ENCODE measurements at regions of chr1 and their contacts with region 1.

Region 1: GRCh38 chr1:211680752-211681327 is 5.4 kb upstream of the NEK2 start:
- DNase-seq: peak; percentile 92
- H3K4me3 Mint-ChIP-seq: no peak overlapping the region
- H3K27ac Mint-ChIP-seq: peak overlapping the region; percentile 24
- H3K4me1 Mint-ChIP-seq: peaks cover 8% of the 10 kb centered on the region
- H3K27me3 Mint-ChIP-seq: no peaks in the 10 kb centered on the region
- CTCF ChIP-seq: peak; percentile 99

Region 2: GRCh38 chr1:211382714-211383480 is 297.9 kb before region 1 on chr1:
- CTCF ChIA-PET with region 1: no interaction called
- POLR2A ChIA-PET with region 1: no interaction called
- intact Hi-C with region 1: no loop called
- DNase-seq: peak; percentile 99
- H3K4me3 Mint-ChIP-seq: peak overlapping the region; percentile 82
- H3K27ac Mint-ChIP-seq: peak overlapping the region; percentile 98
- H3K4me1 Mint-ChIP-seq: peaks cover 26% of the 10 kb centered on the region
- H3K27me3 Mint-ChIP-seq: no peaks in the 10 kb centered on the region
- CTCF ChIP-seq: no peak

Region 3: GRCh38 chr1:211527006-211527405 is 153.8 kb before region 1 on chr1:
- CTCF ChIA-PET with region 1: no interaction called
- POLR2A ChIA-PET with region 1: no interaction called
- intact Hi-C with region 1: no loop called
- DNase-seq: no peak
- H3K4me3 Mint-ChIP-seq: no peak overlapping the region
- H3K27ac Mint-ChIP-seq: peak overlapping the region; percentile 4
- H3K4me1 Mint-ChIP-seq: peaks cover 39% of the 10 kb centered on the region
- H3K27me3 Mint-ChIP-seq: no peaks in the 10 kb centered on the region
- CTCF ChIP-seq: no peak

Region 4: DNA sequence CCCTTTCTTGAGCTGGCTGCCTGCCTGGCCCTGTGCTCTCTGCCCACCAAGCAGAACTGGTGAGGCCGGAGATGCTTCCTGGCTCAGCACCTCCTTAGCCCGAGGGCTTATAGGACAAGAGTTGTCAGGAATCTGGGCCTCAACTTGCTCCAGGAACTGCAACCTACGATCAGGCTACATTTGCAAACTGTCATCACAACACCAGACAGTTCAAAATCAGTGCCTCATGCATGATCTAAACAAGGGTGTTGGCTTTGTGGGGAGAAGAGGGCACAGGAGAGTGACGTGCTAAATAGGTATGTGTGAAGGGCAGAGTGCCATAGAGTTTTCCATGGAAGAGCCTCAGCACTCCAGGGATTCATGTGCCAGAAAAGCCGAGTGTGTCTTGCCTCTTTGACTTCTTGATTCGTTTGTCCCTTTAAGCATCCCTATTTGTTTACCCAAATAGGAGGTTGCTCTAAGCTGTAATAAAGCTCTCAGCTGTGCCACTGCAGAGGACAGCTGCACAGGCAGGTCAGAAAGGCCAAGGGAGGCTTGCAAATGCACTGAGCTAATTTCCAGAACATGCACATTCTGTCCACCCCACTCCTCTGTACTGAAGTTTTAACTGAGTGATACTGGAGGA is 24.7 kb after region 1 on chr1:
- CTCF ChIA-PET with region 1: interaction called, 15 read pairs
- POLR2A ChIA-PET with region 1: no interaction called
- intact Hi-C with region 1: no loop called
- DNase-seq: peak; percentile 83
- H3K4me3 Mint-ChIP-seq: peak overlapping the region; percentile 4
- H3K27ac Mint-ChIP-seq: peak overlapping the region; percentile 7
- H3K4me1 Mint-ChIP-seq: peaks cover 14% of the 10 kb centered on the region
- H3K27me3 Mint-ChIP-seq: no peaks in the 10 kb centered on the region
- CTCF ChIP-seq: no peak

Region 5: DNA sequence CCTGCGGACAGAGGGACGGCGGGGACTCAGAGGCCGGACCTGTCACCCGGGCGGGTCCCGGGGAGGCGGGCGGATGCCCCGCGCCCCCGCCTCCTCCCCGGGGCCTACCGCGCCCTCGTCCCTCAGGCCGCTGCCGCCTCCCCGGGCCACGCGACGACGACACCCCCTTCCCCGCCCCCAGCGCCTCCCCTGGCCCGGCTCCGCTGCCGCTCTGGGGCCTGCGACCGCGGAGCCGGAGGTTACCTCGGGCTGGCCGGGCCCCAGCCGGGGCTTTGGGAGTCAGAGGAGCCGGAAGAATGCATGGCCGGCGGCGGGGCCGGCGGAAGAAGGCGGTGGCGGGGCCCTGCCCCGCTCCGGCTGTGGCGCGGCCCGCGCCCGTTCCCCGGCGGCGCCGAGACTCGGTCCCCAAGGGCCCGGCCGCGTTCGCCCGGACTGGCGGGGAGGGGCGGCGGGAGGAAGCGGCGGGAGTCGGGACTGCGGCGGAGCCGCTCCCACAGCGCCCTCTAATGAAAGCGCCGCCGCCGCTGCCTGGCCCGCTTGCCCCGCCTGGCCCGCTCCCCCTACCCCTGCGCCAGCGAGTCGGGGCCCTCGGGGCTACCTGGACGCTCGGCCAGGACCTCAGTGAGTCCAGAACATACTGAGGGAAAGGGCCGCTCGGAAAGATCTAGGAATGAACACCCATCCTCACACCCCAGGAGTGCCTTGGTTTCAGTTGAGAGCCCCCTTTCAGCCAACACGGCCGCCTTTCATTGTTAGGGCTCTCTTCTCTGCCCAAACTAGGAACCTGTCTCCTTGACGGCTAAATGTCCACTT is 149.7 kb after region 1 on chr1 and contains the start of gene LPGAT1:
- CTCF ChIA-PET with region 1: interaction called, 28 read pairs
- POLR2A ChIA-PET with region 1: interaction called, 11 read pairs
- intact Hi-C with region 1: loop called (anchors 5 kb)
- DNase-seq: peak; percentile 87
- H3K4me3 Mint-ChIP-seq: peak within 1 kb of the TSS; percentile 95
- H3K27ac Mint-ChIP-seq: peak within 1 kb of the TSS; percentile 92
- H3K4me1 Mint-ChIP-seq: peaks cover 33% of the 10 kb centered on the region
- H3K27me3 Mint-ChIP-seq: no peaks in the 10 kb centered on the region
- CTCF ChIP-seq: peak; percentile 91
- total RNA-seq, gene LPGAT1: 76.2 and 82.4 TPM in 2 replicates

Region 6: GRCh38 chr1:211985556-211986264 is 304.9 kb after region 1 on chr1:
- CTCF ChIA-PET with region 1: interaction called, 13 read pairs
- POLR2A ChIA-PET with region 1: interaction called, 4 read pairs
- intact Hi-C with region 1: no loop called
- DNase-seq: no peak
- H3K4me3 Mint-ChIP-seq: no peak overlapping the region
- H3K27ac Mint-ChIP-seq: no peak overlapping the region
- H3K4me1 Mint-ChIP-seq: no peaks in the 10 kb centered on the region
- H3K27me3 Mint-ChIP-seq: no peaks in the 10 kb centered on the region
- CTCF ChIP-seq: no peak

Region 7: DNA sequence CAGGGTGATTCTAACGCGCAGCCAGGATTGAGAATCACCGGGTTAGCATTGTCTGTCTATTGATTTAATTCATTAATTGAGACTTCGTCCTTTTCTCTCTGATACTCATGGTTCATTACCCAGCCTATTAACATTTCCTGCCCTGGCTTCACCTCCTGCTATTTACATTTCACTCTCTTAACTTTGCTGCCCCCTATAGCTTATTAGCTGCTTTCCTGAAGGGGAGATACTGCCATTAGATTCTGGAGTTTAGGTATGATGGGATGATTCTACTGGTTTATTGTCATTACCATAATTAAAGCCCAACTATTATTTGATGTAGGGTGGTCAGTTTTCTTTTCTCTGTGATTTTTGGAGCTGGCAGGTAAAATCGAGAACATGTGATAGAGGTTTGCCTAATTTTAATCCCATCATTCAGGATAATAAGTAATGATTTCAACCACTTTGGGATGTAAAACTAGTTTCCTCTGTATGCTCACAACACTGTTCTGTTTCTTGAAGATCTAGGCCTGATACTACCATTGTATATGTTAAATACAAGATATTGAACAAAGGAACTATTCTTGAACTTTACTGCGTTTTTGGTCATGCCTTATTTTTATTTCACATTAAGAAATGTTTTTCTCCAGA is 610.8 kb after region 1 on chr1:
- CTCF ChIA-PET with region 1: interaction called, 3 read pairs
- POLR2A ChIA-PET with region 1: interaction called, 4 read pairs
- intact Hi-C with region 1: loop called (anchors 5 kb)
- DNase-seq: peak; percentile 85
- H3K4me3 Mint-ChIP-seq: no peak overlapping the region
- H3K27ac Mint-ChIP-seq: peak overlapping the region; percentile 25
- H3K4me1 Mint-ChIP-seq: peaks cover 54% of the 10 kb centered on the region
- H3K27me3 Mint-ChIP-seq: no peaks in the 10 kb centered on the region
- CTCF ChIP-seq: peak; percentile 80

Region 8: DNA sequence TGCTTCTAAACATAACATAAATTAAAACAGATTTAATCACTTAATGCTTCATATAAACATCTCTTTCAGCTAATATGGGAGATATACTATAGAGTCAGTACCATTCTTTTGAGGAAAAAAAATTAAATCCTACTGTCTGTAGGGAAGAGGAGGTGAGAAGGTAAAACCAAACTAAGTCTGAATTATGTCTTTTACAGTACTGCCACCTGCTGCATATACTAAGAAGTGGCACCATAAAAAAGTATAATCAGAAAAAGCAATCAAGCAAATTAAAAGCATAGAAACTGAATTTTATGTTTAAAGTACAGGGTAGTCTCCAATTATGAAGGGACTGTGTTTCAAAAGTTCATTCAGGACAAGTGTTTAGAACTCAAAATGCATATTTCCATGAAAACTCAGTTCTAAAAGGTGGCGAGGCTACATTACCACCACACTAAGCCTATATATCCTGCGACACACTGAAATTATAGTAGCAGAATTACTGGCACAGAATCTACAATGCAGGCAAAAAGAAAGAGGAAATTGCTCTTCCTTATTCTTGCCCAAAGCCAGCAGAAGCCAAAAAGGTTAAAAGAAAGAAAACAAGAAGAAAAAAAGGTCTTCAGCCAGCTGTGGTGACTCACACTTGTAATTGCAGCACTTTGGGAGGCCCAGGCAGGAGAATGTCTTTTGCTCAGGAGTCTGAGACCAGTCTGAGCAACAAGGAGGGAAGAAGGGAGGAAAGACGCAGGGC is 1101.7 kb after region 1 on chr1:
- CTCF ChIA-PET with region 1: interaction called, 3 read pairs
- POLR2A ChIA-PET with region 1: no interaction called
- intact Hi-C with region 1: loop called (anchors 2 kb)
- DNase-seq: peak; percentile 58
- H3K4me3 Mint-ChIP-seq: no peak overlapping the region
- H3K27ac Mint-ChIP-seq: peak overlapping the region; percentile 57
- H3K4me1 Mint-ChIP-seq: peaks cover 7% of the 10 kb centered on the region
- H3K27me3 Mint-ChIP-seq: no peaks in the 10 kb centered on the region
- CTCF ChIP-seq: peak; percentile 84

Measured in MCF 10A (cell line).